SK-N-SH (cell line): ENCODE measurements at regions of chrX and their contacts with region 1.

Region 1: DNA sequence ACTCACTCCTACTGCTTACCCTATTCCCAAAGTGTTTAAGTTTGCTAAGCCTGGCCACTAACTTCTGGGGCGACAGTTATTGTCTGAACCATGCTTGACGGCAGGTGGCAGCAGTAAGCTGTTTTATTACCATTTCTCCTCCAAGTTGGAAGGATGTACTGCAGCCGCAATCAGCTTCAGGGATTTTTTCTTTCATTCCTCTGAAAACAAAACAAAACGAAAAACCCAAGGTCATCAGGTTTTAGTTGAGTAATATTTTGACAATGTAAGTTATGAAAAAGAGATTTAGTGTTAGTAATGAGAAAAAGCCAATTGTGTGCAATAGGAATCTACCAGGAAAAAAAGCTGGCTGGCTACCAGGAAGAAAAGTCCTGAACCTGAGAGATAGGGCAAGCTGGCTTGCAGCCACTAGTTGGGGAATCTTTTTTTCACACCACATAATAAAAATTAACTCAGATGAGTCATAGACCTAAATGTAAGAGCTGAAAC is 13.2 kb upstream of the RAB9B start:
- DNase-seq: peak; percentile 49
- H3K4me3 ChIP-seq: peak overlapping the region in 1 of 2 experiments; percentile 21; a peak in 1 of 4 replicates
- H3K27ac ChIP-seq: peak overlapping the region in 1 of 2 experiments; percentile 37; a peak in 1 of 4 replicates
- H3K4me1 ChIP-seq: no peaks in the 10 kb centered on the region; a peak in 1 of 4 replicates
- H3K27me3 ChIP-seq: no peaks in the 10 kb centered on the region
- CTCF ChIP-seq: peak; percentile 83
- EP300 ChIP-seq: no peak
- RAD21 ChIP-seq: peak; percentile 72

Region 2: GRCh38 chrX:103831803-103832544 is 13.2 kb before region 1 on chrX and contains the start of gene RAB9B:
- CTCF ChIA-PET with region 1: interaction called, 22 read pairs
- POLR2A ChIA-PET with region 1: interaction called, 3 read pairs
- DNase-seq: peak; percentile 83
- H3K4me3 ChIP-seq: peak within 1 kb of the TSS; percentile 63 to 65
- H3K27ac ChIP-seq: peak within 1 kb of the TSS in 1 of 2 experiments; percentile 12; a peak in 2 of 4 replicates
- H3K4me1 ChIP-seq: peaks cover 0 to 8% of the 10 kb centered on the region in 2 experiments; a peak in 1 of 4 replicates
- H3K27me3 ChIP-seq: no peaks in the 10 kb centered on the region; the same call in 1 of the 2 replicates
- CTCF ChIP-seq: no peak
- EP300 ChIP-seq: no peak
- RAD21 ChIP-seq: no peak
- polyA plus RNA-seq, gene RAB9B: 0.64 and 0.96 TPM in 2 replicates

Region 3: DNA sequence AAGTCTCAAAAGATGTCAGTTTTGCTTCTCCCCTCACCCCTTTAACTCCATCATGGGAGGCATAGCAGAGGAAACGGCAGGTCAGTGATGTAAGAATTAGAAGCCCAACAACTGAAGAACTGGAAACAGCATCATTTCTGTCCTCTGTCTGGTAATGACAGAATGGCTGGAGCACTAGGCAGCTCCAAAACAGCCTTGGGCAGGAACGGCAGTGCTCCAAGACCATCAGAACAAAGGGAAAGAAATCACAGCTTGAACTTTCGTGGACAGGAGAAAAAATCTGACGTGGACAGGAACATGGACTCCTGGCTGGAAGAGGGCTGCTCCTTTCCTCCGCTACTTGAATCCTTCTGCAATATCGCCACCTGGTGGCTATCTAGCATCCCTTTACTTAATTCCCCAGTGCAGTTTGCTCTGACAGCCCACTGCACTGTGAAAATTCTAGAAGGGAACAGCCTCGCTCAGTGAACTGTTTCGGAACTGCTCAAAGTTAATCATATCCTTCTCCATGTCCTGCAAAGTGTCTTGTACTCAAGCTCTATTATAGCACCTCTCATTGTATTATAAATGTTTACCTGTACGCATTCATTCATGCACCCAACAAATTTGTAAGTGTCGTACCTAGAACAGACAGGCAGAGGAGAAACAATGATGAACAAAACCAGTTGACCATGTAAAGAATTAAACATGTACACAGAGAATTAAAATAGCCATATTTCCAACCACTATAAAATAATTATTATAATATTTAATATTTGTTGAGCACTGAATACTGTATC is 291.2 kb after region 1 on chrX:
- CTCF ChIA-PET with region 1: interaction called, 11 read pairs
- POLR2A ChIA-PET with region 1: no interaction called
- DNase-seq: peak; percentile 62
- H3K4me3 ChIP-seq: peak overlapping the region; percentile 48 to 58
- H3K27ac ChIP-seq: peak overlapping the region in 1 of 2 experiments; percentile 36; a peak in 1 of 4 replicates
- H3K4me1 ChIP-seq: no peaks in the 10 kb centered on the region
- H3K27me3 ChIP-seq: no peaks in the 10 kb centered on the region
- CTCF ChIP-seq: peak; percentile 80
- EP300 ChIP-seq: no peak
- RAD21 ChIP-seq: peak; percentile 81